ENCODE measurements at regions of chr1 and their contacts with region 1.

Region 1: DNA sequence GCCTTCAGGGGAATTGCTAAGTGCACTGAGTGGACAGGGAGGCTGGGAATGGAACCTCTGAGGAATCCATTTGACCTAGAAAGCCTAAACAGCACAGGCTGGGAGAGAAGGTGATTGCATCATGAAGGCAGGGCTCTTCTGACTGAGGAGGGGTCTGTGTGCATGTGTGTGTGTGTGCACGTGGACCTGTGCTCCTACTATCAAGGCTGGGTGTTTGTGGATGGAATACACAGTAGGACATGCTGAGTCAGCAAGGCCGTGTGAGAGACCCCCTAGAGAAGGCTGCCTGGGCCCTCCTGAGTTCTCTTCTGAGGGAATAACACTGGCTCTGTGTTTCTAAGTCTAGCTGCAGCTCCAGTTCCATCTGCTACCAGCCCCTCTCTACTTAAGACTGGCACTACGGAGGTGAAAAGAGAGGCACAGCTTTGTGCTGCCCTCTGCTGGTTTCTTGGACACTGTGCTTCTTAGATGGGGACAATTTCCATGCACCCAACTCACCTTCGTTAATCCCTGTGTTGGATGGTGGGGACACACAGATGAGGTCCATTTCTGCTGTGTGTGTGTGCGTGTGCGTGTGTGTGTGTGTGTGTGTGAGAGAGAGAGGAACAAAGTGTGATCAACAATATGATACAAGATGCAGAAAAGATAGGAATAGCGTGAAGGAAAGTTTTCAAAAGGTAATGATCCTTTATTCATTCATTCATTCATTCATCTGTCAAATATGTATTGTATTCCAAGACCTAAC is 6.2 kb upstream of the EFCAB14 start:
- DNase-seq: peak; percentile 22
- H3K4me3 ChIP-seq: no peak overlapping the region
- H3K27me3 ChIP-seq: peaks cover 4% of the 10 kb centered on the region
- CTCF ChIP-seq: peak; percentile 90

Region 2: GRCh38 chr1:46487818-46488218 is 237.3 kb before region 1 on chr1:
- CTCF ChIA-PET with region 1: no interaction called
- POLR2A ChIA-PET with region 1: no interaction called
- DNase-seq: no peak
- H3K4me3 ChIP-seq: no peak overlapping the region
- H3K27me3 ChIP-seq: peaks cover 76% of the 10 kb centered on the region
- CTCF ChIP-seq: peak; percentile 23; the same call in 1 of the 2 replicates

Region 3: GRCh38 chr1:46622344-46622743 is 102.8 kb before region 1 on chr1:
- CTCF ChIA-PET with region 1: interaction called, 59 read pairs
- POLR2A ChIA-PET with region 1: no interaction called
- DNase-seq: no peak
- H3K4me3 ChIP-seq: 0 out of 2 replicates have a peak overlapping the region, but pooled peaks have one; percentile 6
- H3K27me3 ChIP-seq: no peaks in the 10 kb centered on the region
- CTCF ChIP-seq: peak; percentile 73

Region 4: DNA sequence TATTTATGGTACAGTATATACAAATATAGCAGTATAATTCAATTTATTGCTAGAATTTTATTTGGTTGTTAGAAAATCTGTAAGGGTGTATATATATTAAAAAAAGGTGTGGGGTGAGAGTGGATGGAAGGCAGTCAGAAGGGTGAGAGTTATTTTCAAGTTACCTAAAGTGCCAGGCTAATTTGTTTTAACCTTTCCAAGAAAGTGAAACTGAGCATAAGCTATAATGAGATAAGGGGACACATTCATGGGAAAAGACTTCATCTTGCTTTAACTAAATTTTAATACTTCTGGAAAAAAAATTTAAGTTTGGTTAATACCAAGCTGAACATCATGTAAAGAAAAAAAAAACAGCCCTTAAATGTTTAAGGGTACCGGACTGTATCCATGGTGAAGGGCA is 48.6 kb before region 1 on chr1:
- CTCF ChIA-PET with region 1: no interaction called
- POLR2A ChIA-PET with region 1: no interaction called
- DNase-seq: no peak
- H3K4me3 ChIP-seq: no peak overlapping the region
- H3K27me3 ChIP-seq: no peaks in the 10 kb centered on the region
- CTCF ChIP-seq: no peak

Region 5: DNA sequence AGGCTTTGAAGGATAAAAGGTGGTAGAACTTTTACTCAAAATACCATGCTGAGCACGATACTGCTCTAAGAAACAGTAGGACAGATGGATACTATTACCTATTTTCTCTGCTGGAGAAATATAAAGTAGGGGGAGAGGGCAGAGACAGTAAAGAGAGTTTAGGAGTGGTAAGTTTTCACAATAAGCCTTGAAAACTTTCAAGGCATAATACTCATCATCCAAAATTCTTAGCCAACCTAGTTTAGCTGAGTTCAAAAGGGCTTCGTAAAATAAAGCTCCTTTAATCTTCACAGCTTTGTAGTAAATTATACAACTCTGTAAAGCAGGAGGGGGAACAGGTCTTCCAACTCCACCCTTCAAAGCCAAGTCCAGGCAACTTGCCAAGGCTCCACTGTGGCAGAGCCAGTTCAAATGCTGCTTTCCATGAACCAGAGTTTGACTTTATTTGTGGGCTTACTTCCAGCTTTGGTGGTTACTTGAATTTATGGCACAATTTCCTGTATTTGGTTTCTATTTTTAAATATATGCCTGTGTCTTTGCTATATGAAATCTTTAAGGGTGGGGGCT is 38.0 kb before region 1 on chr1:
- CTCF ChIA-PET with region 1: no interaction called
- POLR2A ChIA-PET with region 1: no interaction called
- DNase-seq: no peak
- H3K4me3 ChIP-seq: no peak overlapping the region
- H3K27me3 ChIP-seq: no peaks in the 10 kb centered on the region
- CTCF ChIP-seq: no peak

Region 6: GRCh38 chr1:46714991-46715390 is 10.2 kb before region 1 on chr1:
- CTCF ChIA-PET with region 1: interaction called, 25 read pairs
- POLR2A ChIA-PET with region 1: no interaction called
- DNase-seq: no peak
- H3K4me3 ChIP-seq: no peak overlapping the region
- H3K27me3 ChIP-seq: no peaks in the 10 kb centered on the region
- CTCF ChIP-seq: no peak

Measured in BJ (cell line).